GM13976 (cell line): ENCODE measurements at regions of chr2 and their contacts with region 1.

Region 1: DNA sequence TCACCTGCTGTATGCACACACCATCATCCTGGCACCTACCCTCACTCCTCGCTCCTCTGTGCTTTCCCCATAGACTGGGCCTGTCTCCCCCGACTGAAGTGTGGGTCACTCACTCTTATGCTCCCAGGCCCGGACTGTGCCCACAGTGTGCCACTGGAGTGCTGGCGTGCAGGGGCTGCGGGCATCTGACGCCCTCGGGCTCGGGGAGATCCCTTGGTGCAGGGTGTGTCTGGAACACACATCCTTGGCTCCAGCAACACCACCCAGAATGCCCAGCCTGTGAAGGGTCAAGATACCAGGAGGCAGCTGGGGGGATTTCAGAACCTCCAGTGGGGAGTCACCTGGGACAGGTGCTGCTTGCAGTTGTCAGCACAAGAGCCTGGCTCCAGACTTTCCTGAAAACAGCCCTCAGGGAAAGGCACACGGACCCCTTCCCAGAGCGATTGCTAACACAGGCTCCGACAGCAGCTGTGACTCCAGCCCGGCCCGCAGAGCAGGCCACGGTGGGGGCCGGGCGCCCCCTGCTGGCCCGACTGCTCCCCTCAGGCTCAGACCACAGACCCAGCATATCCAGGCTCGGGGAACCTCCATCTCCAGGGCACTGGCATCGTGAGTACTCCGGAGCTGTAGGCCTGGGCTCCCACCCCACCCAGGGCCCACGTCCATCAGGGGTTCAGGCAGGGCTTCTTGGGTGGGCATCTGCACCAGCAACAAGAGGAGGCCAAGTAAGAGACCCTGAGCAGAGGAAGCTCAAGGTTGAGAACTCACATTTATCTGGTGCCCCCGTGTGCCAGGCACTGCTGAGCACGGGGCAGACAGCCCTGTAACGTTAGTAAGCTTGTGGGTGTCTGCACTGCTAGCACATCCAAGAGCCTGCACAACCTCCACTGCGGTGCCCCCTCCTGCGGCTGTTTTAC is 8.6 kb downstream of the HS1BP3 start:
- DNase-seq: peak; percentile 93
- CTCF ChIP-seq: peak; percentile 86

Region 2: GRCh38 chr2:20135631-20136050 is 506.7 kb before region 1 on chr2:
- in situ Hi-C with region 1: loop called (anchors 25 kb)
- DNase-seq: peak; percentile 87
- CTCF ChIP-seq: peak; percentile 93

Region 3: DNA sequence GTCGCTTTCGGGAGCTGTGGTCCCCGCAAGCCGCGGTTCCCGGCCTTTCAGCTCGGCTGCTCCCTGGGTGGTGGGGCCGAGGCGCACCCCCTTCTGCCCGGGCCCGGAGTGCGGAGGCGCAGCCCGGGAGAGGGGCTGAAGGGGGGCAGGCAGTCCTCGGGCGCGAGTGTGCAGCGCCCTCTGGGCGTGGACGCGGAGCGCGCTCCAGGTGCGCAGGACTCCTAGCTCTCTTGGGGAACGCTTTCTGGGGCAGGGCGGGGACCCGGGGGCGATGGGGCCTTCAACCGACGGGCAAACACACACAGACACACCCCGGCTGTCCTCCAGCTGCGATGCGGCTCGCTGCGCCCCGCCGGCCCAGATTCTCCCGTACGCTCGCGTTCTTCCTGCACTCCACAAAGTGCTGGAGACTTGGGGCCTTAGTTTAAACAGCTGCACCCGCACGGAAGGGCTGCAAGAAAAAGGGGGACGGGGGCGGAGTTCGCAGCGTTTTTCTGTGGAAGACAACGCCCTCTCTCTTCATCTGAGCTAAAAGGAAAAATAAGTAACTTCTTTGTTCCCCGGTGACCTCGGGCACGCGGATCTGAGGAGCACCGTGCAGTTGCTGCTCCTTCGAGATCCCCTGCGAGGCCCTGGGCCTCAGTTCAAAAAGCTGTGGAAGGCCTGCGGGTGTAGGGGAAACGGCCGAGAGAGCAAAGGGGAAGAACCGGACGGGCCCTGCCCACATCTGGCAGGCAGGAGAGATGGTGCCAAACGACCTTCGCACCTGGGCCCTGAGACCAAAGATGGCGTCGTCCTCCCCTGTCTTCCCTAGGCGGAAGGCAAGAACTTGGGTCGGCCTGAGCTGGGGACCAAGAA is 416.8 kb before region 1 on chr2:
- in situ Hi-C with region 1: loop called (anchors 25 kb)
- DNase-seq: peak; percentile 88
- CTCF ChIP-seq: peak; percentile 74

Region 4: DNA sequence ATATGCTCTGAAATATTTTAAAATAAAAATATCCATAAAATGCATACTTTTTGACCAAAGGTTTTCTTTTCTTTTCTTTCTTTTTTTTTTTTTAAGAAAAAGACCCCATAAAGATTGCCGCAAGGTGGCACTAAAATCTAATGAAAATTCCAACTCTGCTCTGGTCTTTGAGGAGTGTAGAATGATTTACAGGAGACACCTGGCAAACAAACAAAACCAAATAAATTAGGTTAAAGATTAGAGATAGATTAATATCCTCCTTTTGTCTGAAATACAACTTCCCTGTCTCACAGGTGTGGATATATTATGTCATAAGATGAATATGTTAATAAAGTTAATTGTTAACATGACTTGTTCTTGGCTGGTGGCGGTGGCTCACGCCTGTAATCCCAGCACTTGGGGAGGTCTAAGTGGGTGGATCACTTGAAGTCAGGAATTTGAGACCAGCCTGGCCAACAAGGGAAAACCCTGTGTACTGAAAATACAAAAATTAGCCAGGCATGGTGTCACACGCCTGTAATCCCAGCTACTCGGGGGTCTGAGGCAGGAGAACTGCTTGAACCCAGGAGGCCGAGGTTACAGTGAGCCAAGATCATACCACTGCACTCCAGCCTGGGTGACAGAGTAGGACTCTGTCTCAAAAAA is 198.9 kb before region 1 on chr2:
- in situ Hi-C with region 1: loop called (anchors 5 kb)
- DNase-seq: peak; percentile 54
- CTCF ChIP-seq: no peak

Region 5: GRCh38 chr2:21118302-21118920 is 476.1 kb after region 1 on chr2:
- in situ Hi-C with region 1: no loop called
- DNase-seq: peak; percentile 38
- CTCF ChIP-seq: peak; percentile 40